ENCODE measurements at regions of chr7 and their contacts with region 1.

Region 1: DNA sequence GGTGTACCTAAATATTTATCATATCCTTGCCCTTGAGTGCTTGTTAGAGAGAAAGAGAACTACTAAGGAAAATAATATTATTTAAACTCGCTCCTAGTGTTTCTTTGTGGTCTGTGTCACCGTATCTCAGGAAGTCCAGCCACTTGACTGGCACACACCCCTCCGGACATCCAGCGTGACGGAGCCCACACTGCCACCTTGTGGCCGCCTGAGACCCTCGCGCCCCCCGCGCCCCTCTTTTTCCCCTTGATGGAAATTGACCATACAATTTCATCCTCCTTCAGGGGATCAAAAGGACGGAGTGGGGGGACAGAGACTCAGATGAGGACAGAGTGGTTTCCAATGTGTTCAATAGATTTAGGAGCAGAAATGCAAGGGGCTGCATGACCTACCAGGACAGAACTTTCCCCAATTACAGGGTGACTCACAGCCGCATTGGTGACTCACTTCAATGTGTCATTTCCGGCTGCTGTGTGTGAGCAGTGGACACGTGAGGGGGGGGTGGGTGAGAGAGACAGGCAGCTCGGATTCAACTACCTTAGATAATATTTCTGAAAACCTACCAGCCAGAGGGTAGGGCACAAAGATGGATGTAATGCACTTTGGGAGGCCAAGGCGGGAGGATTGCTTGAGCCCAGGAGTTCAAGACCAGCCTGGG is 11.4 kb downstream of the SERPINE1 start:
- DNase-seq: peak; percentile 88
- H3K4me3 ChIP-seq: peak overlapping the region; percentile 3 to 4; a peak in 2 of 4 replicates
- H3K27ac ChIP-seq: peak overlapping the region; percentile 71 to 98
- H3K4me1 ChIP-seq: peaks cover 11 to 24% of the 10 kb centered on the region in 2 experiments; a peak in 3 of 4 replicates
- H3K27me3 ChIP-seq: no peaks in the 10 kb centered on the region
- CTCF ChIP-seq: peak; percentile 99
- EP300 ChIP-seq: peak; percentile 75 to 98
- RAD21 ChIP-seq: peak; percentile 63

Region 2: DNA sequence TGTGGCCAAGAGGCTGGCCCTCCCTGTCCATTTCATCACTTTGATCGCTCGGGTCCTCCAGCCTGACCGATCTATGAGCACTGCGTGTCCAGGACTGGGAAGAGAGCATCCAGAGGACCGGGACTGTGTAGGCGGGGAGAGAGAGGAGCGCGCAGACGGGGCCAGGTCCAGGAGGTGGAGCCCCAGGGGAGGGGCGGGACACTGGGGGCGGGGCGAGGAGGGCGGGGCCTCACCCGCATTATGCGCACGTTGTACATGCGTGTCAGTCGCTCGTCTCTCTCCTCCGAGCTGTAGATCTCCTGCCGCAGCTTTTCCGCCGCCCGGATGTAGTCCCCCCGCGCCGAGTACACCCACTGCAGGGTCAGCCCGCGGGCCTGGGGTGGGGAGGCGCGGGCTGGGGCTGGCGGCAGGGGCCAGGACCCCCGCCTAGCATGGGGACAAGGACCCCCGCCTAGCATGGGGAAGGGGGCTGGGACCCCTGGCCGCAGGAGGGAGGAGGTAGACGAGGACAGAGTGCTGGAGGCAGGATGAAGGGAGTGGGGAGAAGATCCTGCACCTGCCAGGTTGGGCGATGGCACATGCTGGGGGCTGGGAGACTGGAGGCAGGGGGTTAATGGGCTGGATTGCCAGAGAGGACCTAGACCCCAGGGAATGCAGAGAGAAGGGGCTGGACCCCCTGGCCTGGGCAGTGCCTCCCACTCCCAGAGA is 511.7 kb before region 1 on chr7:
- CTCF ChIA-PET with region 1: no interaction called
- POLR2A ChIA-PET with region 1: no interaction called
- DNase-seq: peak; percentile 100
- H3K4me3 ChIP-seq: peak overlapping the region; percentile 36 to 58
- H3K27ac ChIP-seq: peak overlapping the region in 1 of 2 experiments; percentile 20; a peak in 1 of 4 replicates
- H3K4me1 ChIP-seq: peaks cover 0 to 10% of the 10 kb centered on the region in 2 experiments; a peak in 1 of 4 replicates
- H3K27me3 ChIP-seq: no peaks in the 10 kb centered on the region
- CTCF ChIP-seq: no peak
- EP300 ChIP-seq: no peak
- RAD21 ChIP-seq: no peak

Region 3: DNA sequence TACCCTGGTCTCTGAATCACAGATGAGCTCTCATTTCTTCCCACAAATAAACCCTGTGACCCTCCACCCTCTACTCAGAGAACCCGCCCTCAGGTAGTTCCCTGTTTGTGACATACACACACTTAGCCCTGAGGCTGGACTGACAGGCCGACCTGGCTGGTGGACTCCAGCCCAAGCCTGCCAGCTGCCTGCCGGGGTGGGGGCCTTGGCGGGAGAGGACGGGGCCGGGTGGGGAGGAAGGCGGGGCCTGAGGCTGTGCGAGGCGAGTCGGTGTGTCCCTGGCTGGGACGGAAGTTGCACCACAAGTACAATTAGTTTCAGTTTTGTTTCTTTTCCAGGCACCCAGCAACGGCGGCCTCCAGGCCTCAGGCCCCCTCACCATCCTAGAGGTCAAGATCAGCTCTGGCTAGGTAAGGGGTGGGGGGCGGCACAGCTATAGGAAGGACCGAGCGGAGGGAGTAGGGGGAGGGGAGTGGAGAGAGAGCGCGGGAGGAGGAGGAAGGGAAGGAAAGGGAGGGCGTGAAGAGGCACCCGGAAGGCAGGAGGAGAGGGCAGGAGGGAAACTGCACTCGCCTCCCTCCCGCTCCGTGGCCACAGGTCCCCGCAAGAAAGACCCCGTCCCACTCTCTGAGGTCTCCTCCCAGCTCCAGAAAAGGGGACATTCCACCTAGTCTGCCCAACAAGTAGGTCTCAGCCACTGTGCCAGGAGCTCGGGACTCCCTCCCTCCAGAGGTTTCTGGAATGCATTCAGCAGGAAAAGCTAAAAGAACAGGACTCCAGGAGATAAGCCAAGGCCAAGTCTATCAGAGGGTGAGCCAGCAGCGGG is 53.0 kb before region 1 on chr7 and contains the start of gene TRIM56:
- CTCF ChIA-PET with region 1: interaction called, 11 read pairs
- POLR2A ChIA-PET with region 1: no interaction called
- DNase-seq: peak; percentile 75
- H3K4me3 ChIP-seq: peak within 1 kb of the TSS; percentile 44 to 61
- H3K27ac ChIP-seq: peak within 1 kb of the TSS in 1 of 2 experiments; percentile 66; a peak in 3 of 4 replicates
- H3K4me1 ChIP-seq: peaks cover 0 to 4% of the 10 kb centered on the region in 2 experiments; a peak in 2 of 4 replicates
- H3K27me3 ChIP-seq: no peaks in the 10 kb centered on the region
- CTCF ChIP-seq: no peak
- EP300 ChIP-seq: no peak
- RAD21 ChIP-seq: no peak
- polyA plus RNA-seq, gene TRIM56: 2.5 and 2.9 TPM in 2 replicates

Region 4: GRCh38 chr7:101153969-101154692 is 15.8 kb after region 1 on chr7 and contains the start of gene AP1S1:
- CTCF ChIA-PET with region 1: interaction called, 116 read pairs
- POLR2A ChIA-PET with region 1: no interaction called
- DNase-seq: peak; percentile 100
- H3K4me3 ChIP-seq: peak within 1 kb of the TSS; percentile 65 to 88
- H3K27ac ChIP-seq: peak within 1 kb of the TSS; percentile 38 to 84
- H3K4me1 ChIP-seq: peaks cover 7 to 15% of the 10 kb centered on the region in 2 experiments; a peak in 2 of 4 replicates
- H3K27me3 ChIP-seq: no peaks in the 10 kb centered on the region
- CTCF ChIP-seq: no peak
- EP300 ChIP-seq: peak in 1 of 2 experiments; percentile 52; a peak in 3 of 4 replicates
- RAD21 ChIP-seq: no peak; the same call in 1 of the 2 replicates
- polyA plus RNA-seq, gene AP1S1: 616 and 704 TPM in 2 replicates

Region 5: GRCh38 chr7:101185258-101185839 is 47.0 kb after region 1 on chr7:
- CTCF ChIA-PET with region 1: interaction called, 257 read pairs
- POLR2A ChIA-PET with region 1: interaction called, 3 read pairs
- DNase-seq: no peak
- H3K4me3 ChIP-seq: no peak overlapping the region
- H3K27ac ChIP-seq: peak overlapping the region in 1 of 2 experiments; percentile 37; a peak in 2 of 4 replicates
- H3K4me1 ChIP-seq: peaks cover 0 to 8% of the 10 kb centered on the region in 2 experiments; a peak in 1 of 4 replicates
- H3K27me3 ChIP-seq: peaks cover 6% of the 10 kb centered on the region; the same call in 1 of the 2 replicates
- CTCF ChIP-seq: no peak
- EP300 ChIP-seq: no peak
- RAD21 ChIP-seq: no peak

Region 6: GRCh38 chr7:101217388-101218235 is 79.3 kb after region 1 on chr7 and contains the starts of genes PLOD3 and ZNHIT1:
- CTCF ChIA-PET with region 1: interaction called, 45 read pairs
- POLR2A ChIA-PET with region 1: no interaction called
- DNase-seq: peak; percentile 100
- H3K4me3 ChIP-seq: peak within 1 kb of the TSS; percentile 66 to 84
- H3K27ac ChIP-seq: peak within 1 kb of the TSS; percentile 93 to 95
- H3K4me1 ChIP-seq: peaks cover 8 to 27% of the 10 kb centered on the region in 2 experiments; a peak in 2 of 4 replicates
- H3K27me3 ChIP-seq: no peaks in the 10 kb centered on the region
- CTCF ChIP-seq: peak; percentile 25; the same call in 1 of the 2 replicates
- EP300 ChIP-seq: peak in 1 of 2 experiments; percentile 35; a peak in 1 of 4 replicates
- RAD21 ChIP-seq: no peak
- polyA plus RNA-seq, gene PLOD3: 134 and 276 TPM in 2 replicates
- polyA plus RNA-seq, gene ZNHIT1: 71.6 and 101 TPM in 2 replicates